Activated CD4-positive, alpha-beta T cell treated with anti-CD3 and anti-CD28 coated beads for 36 hours (primary cell): ENCODE measurements at regions of chr14 and their contacts with region 1.

Region 1: GRCh38 chr14:50321009-50321660 is 9.0 kb downstream of the DMAC2L start:
- DNase-seq: peak; percentile 77
- ATAC-seq: peak; percentile 98
- H3K4me3 Mint-ChIP-seq: no peak overlapping the region
- H3K27ac Mint-ChIP-seq: no peak overlapping the region
- H3K4me1 Mint-ChIP-seq: peaks cover 31% of the 10 kb centered on the region
- H3K27me3 Mint-ChIP-seq: no peaks in the 10 kb centered on the region

Region 2: DNA sequence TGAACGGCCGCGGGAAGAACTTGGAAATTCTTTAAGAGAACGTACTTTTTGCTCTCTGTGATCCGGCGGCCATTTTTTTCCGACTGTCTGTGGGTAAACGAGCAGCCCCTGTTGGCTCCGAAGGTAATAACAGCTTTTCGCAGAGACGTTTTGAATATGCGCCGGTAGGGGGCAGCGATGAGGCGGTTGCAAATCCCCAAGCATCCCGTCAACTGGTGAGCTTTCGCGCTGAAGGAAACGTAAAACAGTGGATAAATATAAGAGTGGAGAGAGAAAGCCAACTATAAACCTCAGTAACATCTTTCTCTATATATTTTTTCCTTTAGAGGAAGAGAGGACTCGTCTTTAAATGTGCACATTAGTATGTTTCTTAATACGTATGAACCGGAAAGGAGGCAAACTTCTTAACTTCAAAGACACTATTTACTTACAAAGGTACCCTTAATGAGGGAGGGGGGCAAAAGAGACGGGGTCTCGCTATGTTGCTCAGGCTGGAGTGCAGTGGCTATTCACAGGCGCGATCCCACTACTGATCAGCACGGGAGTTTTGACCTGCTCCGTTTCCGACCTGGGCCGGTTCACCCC is 459.0 kb before region 1 on chr14:
- CTCF ChIA-PET with region 1: interaction called, 3 read pairs
- POLR2A ChIA-PET with region 1: no interaction called
- intact Hi-C with region 1: loop called in 1 of 2 experiments (anchors 5 kb)
- DNase-seq: peak; percentile 92
- ATAC-seq: peak; percentile 13
- H3K4me3 Mint-ChIP-seq: no peak overlapping the region
- H3K27ac Mint-ChIP-seq: no peak overlapping the region
- H3K4me1 Mint-ChIP-seq: peaks cover 20% of the 10 kb centered on the region
- H3K27me3 Mint-ChIP-seq: no peaks in the 10 kb centered on the region

Region 3: GRCh38 chr14:50342221-50343078 is 21.3 kb after region 1 on chr14:
- CTCF ChIA-PET with region 1: interaction called, 20 read pairs
- POLR2A ChIA-PET with region 1: no interaction called
- intact Hi-C with region 1: loop called (anchors 1 kb)
- DNase-seq: peak; percentile 76
- ATAC-seq: no peak
- H3K4me3 Mint-ChIP-seq: no peak overlapping the region
- H3K27ac Mint-ChIP-seq: no peak overlapping the region
- H3K4me1 Mint-ChIP-seq: peaks cover 30% of the 10 kb centered on the region
- H3K27me3 Mint-ChIP-seq: peaks cover 3% of the 10 kb centered on the region

Region 4: DNA sequence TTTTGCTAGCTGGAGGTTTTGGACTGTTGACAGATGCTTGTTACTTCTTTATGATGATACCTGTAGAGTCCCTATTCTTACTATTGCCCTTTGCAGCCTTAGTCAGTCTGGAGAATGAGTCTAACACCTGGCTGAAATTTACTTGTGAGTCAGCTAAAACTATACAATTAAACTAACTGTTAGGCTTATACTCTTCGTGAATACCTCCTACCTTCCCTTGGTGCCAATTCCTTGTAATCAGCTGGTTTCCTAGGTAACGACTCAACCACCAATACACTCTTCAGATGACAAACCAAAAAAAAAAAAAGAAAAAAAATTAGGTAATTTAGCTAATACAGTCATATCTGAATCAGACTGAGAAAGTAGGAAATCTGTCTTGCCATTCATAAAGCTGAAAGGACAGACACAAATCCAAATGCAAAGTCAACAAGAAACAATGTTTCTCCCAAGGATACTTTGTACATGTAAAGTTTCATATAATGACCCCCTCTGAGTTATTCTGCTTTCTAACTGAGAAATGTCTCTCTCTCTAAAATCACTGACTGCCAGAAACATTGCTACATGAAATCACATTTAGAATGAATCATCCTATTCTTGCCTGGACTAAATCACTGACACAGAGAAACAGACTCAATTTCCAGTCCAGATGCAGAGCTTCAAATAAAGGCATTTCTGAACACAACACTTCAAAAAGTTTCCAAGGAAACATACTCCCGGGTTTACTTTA is 132.0 kb after region 1 on chr14:
- CTCF ChIA-PET with region 1: interaction called, 8 read pairs
- POLR2A ChIA-PET with region 1: interaction called, 9 read pairs
- intact Hi-C with region 1: loop called (anchors 1 kb)
- DNase-seq: no peak
- ATAC-seq: peak; percentile 92
- H3K4me3 Mint-ChIP-seq: no peak overlapping the region
- H3K27ac Mint-ChIP-seq: peak overlapping the region; percentile 22
- H3K4me1 Mint-ChIP-seq: peaks cover 16% of the 10 kb centered on the region
- H3K27me3 Mint-ChIP-seq: no peaks in the 10 kb centered on the region

Region 5: DNA sequence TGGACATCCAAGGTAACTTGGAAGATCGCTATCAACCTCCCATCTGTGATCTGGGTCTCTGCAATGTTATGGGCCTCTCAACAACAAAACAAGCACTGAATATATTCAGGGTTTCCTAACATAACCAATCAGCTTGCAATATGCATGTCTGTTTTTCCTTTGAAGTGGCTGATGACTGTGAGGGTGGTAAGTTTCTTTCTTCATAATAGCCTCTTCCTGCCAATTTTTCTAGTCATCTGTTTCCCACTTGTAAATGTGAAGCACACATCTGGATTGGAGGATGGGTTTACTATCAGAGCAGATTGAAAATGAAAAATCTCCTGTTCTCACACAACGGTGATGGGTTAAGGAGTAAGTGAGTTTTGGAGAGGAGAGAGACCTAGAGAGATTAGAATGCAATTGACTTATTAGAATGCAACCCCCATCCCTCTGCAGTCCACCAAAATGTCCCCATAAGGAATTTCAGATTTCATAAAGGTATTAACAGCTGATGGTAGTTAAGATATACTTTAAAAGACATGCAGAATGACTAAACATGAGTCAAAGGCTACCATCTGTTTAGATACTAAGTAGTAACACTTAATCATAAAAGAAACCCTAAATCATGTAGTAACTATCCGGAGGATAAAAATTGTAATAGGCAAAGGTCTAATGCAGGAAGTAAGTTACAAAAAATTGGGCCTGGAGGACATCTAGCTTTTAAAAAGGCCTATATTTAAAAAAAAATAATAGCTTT is 405.4 kb after region 1 on chr14:
- CTCF ChIA-PET with region 1: interaction called, 3 read pairs
- POLR2A ChIA-PET with region 1: no interaction called
- intact Hi-C with region 1: loop called in 1 of 2 experiments (anchors 1 kb)
- DNase-seq: peak; percentile 31
- ATAC-seq: peak; percentile 93
- H3K4me3 Mint-ChIP-seq: peak overlapping the region; percentile 39
- H3K27ac Mint-ChIP-seq: peak overlapping the region; percentile 95
- H3K4me1 Mint-ChIP-seq: peaks cover 32% of the 10 kb centered on the region
- H3K27me3 Mint-ChIP-seq: no peaks in the 10 kb centered on the region

Region 6: DNA sequence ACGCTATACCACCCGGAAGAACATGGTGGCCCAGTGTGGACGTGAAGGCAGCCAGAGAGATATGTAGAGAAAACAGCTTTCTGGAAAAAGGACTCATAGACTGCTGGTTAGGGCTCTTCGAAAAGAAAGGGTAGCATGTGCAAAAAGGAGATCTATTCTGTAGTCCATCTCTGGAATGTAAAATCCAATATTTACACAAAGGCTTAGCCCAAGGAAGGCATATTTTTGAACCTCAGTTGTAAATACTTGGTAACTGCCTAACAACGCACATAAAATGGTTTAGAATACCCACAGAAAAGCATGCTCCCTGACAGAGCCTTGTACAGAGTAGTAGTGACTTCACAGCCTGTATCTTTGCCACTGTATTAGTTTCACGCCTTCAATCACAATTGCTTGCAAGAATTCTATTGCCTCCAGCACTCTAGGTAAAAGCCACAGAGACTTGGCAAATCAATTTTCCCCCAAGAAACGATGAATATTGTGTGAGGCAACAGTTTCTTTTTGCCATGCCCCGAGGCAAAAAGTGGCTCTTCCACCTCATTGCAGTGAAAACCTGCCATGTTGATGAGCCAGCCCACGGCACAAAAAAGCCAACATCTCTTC is 714.6 kb after region 1 on chr14:
- CTCF ChIA-PET with region 1: no interaction called
- POLR2A ChIA-PET with region 1: no interaction called
- intact Hi-C with region 1: no loop called
- DNase-seq: no peak
- ATAC-seq: no peak
- H3K4me3 Mint-ChIP-seq: no peak overlapping the region
- H3K27ac Mint-ChIP-seq: no peak overlapping the region
- H3K4me1 Mint-ChIP-seq: no peaks in the 10 kb centered on the region
- H3K27me3 Mint-ChIP-seq: no peaks in the 10 kb centered on the region